ENCODE measurements at regions of chr13 and their contacts with region 1.

Region 1: DNA sequence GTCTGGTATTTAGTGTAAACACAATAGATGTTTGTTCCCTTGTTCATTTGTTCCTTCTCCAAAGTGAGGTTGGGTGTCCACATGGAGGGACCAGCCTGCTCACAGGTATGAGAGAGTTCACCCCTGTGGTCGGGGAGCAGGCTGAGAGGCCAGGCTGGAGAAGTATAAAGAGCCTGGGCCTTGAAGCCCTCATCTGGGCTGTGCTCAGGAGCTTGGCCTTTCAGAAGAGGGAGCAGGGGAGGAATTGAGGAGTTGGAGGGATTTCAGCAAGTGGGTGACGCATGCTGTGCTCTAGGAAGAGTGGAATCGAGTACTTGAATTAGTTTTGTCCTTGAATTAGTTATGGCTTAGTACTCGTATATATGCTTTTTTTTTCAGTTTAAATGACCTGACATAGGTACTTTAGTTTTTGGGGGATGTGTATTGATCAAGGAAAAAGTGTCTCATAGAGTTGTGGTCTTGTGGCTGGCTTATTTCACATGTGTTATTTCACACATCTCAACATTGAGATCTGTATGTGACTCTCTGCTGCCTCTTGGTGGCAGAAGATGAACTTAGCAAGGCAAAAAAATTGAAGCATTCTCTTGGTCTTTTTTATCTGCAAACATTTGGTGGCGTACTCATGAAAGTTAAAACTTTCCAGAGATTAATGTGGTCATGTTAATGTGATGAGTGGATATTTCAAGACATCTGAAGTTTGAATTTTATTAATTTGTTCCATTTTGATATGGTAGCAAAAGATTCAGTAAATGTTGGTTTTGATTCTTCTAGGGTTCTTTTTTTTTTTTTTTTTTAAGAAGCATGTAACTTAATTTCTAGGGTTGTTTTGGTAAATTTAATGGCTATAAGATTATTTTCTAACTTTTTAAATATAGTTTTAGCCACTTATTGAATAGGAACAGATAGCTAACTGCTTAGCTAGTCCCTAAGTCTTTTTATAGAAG is 54.3 kb downstream of the SLAIN1 start:
- DNase-seq: no peak

Region 2: DNA sequence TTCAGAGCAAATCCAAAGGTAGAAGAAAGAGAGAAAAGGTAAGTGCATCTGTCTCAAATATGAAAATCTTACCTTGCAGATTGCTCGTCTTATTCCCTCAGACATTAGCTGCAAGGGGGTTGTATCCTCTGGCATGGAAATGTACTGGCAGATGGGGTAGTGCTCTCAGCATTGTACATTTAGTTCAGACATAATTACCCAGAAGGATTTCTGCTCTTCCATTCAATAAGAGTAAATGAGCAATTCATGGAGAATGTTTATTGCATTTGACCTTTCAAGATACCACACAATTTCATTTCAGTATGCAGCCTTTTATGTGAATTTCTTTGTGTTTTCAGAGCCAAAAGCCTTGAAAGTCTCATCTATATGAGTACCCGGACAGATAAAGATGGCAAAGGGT is 152.4 kb before region 1 on chr13:
- intact Hi-C with region 1: loop called (anchors 10 kb)
- DNase-seq: no peak